ENCODE measurements at regions of chr18 and their contacts with region 1.

Region 1: GRCh38 chr18:76349067-76349715 is 145.9 kb downstream of the ZNF516 start:
- DNase-seq: peak; percentile 50 to 70
- ATAC-seq: peak in 3 of 4 donors; percentile 41 to 78 (median 56)
- H3K4me3 ChIP-seq: peak overlapping the region; percentile 29
- H3K27ac ChIP-seq: no peak overlapping the region
- H3K4me1 ChIP-seq: no peaks in the 10 kb centered on the region
- H3K27me3 ChIP-seq: no peaks in the 10 kb centered on the region
- CTCF ChIP-seq: peak; percentile 86

Region 2: GRCh38 chr18:76042511-76042910 is 306.7 kb before region 1 on chr18:
- intact Hi-C with region 1: no loop called
- DNase-seq: no peak
- ATAC-seq: no peak
- H3K4me3 ChIP-seq: no peak overlapping the region
- H3K27ac ChIP-seq: no peak overlapping the region
- H3K4me1 ChIP-seq: no peaks in the 10 kb centered on the region
- H3K27me3 ChIP-seq: no peaks in the 10 kb centered on the region
- CTCF ChIP-seq: no peak

Region 3: GRCh38 chr18:76265497-76266235 is 83.5 kb before region 1 on chr18:
- intact Hi-C with region 1: loop called in 1 of 2 experiments (anchors 1 kb)
- DNase-seq: peak; percentile 43 to 61
- ATAC-seq: peak in 1 of 4 donors; percentile 74
- H3K4me3 ChIP-seq: no peak overlapping the region
- H3K27ac ChIP-seq: peak overlapping the region; percentile 21
- H3K4me1 ChIP-seq: no peaks in the 10 kb centered on the region
- H3K27me3 ChIP-seq: peaks cover 0 to 33% (median 6%) of the 10 kb centered on the region in 3 donors
- CTCF ChIP-seq: no peak